ENCODE measurements at regions of chr12 and their contacts with region 1.

Region 1: DNA sequence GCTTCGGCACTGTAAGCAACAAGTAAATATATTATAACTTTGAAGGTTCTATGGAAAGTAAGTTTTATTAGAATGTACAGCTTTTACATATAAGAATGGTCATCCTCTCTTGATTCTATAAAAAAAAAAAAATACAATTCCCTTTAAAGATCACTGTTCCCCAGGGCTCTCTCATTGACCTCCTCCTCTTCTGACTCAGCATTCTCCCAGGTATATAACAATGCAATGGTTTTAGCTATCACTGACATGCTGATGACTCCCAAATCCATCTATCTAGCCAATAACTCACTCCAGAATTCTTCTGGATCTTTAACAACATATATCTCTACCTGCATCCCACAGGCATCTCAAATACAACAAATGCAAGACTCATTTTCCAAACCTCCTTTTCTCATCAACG is 62.7 kb downstream of the EEA1 start:
- DNase-seq: no peak
- ATAC-seq: no peak
- H3K4me3 ChIP-seq: no peak overlapping the region
- H3K4me3 Mint-ChIP-seq: no peak overlapping the region
- H3K27ac ChIP-seq: no peak overlapping the region
- H3K27ac Mint-ChIP-seq: no peak overlapping the region
- H3K4me1 ChIP-seq: peaks cover 0 to 3% of the 10 kb centered on the region in 2 donors
- H3K4me1 Mint-ChIP-seq: peaks cover 8 to 38% (median 23%) of the 10 kb centered on the region in 7 donors
- H3K27me3 ChIP-seq: no peaks in the 10 kb centered on the region
- H3K27me3 Mint-ChIP-seq: no peaks in the 10 kb centered on the region

Region 2: DNA sequence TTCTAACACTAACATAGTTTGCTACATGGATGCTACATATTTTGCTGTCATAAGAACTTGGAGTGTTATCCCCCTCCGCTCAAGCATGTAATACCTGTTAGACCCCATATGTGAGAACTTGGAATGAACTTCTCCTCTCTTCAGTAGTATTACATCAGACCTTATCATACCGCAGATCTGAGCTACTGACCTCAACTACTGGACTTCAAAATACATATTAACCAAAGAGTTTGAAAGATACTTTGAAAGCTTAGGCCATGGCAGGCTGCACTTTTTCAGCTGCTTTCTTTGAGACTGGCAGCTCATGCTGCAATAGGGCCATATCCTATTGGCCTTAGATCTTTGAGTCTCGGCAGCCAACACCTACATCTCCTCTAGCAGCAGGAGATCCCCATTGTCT is 12.1 kb before region 1 on chr12:
- CTCF ChIA-PET with region 1: no interaction called
- POLR2A ChIA-PET with region 1: no interaction called
- intact Hi-C with region 1: loop called in 1 of 2 experiments (anchors 2 kb)
- DNase-seq: no peak
- ATAC-seq: no peak
- H3K4me3 ChIP-seq: no peak overlapping the region
- H3K4me3 Mint-ChIP-seq: no peak overlapping the region
- H3K27ac ChIP-seq: no peak overlapping the region
- H3K27ac Mint-ChIP-seq: peak overlapping the region in 3 of 9 donors; percentile 0 to 10 (median 10)
- H3K4me1 ChIP-seq: no peaks in the 10 kb centered on the region
- H3K4me1 Mint-ChIP-seq: peaks cover 0 to 16% (median 5%) of the 10 kb centered on the region in 7 donors
- H3K27me3 ChIP-seq: no peaks in the 10 kb centered on the region
- H3K27me3 Mint-ChIP-seq: no peaks in the 10 kb centered on the region